Posterior cingulate gyrus (tissue), 11 donors: ENCODE measurements at regions of chr15 and their contacts with region 1.

Region 1: GRCh38 chr15:78750566-78750965 is 60.7 kb downstream of the ADAMTS7 start:
- DNase-seq: peak in 1 of 10 donors; percentile 35

Region 2: DNA sequence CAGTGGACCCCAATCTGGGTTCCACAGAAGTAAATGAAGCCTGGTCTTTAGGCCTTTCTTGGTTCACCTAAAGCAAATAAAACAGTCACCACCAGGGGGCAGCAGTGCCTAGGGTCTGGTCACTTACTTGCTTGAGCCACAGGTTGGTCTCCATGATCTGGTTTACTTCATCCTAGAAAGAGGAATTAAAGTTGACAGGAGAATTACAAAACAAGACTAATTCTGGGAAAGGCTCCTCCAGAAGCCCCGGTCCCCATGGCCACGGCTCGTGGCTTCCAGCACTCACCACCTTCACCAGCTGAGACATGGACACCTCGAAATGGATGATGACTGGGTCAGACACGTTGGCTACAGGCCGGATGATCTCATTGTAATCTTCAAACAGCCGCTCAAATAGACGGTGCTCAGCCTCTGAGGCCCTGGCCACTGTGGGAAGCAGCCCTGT is 132.1 kb before region 1 on chr15:
- intact Hi-C with region 1: loop called (anchors 5 kb)
- DNase-seq: peak; percentile 64 to 95 (median 90)

Region 3: GRCh38 chr15:78859971-78860732 is 109.6 kb after region 1 on chr15:
- intact Hi-C with region 1: loop called (anchors 10 kb)
- DNase-seq: peak; percentile 48 to 95 (median 62)